HepG2 (cell line): ENCODE measurements at regions of chr1 and their contacts with region 1.

Region 1: DNA sequence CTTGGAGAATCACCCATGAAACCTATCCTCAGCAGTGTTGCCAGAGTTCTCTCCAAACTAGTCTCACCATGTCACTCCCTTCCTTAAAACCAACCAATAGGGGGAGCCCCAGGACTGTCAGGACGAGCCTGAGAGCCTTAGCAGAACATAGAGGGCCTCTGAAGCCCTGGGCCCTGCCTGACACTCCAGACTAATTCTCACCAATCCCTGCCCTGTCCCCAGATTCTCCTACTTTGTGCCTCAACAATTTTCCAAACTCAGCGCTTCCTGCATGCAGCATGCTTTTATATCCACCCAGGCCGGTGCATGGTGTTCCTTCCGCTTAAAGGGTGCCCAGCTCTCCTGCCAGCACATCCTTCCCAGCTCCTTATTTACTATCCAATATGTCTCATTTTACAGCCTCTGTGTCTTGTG is 42.7 kb downstream of the HSD3B1 start:
- DNase-seq: peak; percentile 53
- ATAC-seq: peak; percentile 98
- H3K4me3 ChIP-seq: no peak overlapping the region
- H3K27ac ChIP-seq: no peak overlapping the region
- H3K4me1 ChIP-seq: no peaks in the 10 kb centered on the region
- H3K27me3 ChIP-seq: peaks cover 1 to 6% of the 10 kb centered on the region in 2 experiments; a peak in 2 of 5 replicates
- CTCF ChIP-seq: peak; percentile 72
- EP300 ChIP-seq: no peak
- POLR2A ChIP-seq: no peak
- RAD21 ChIP-seq: 0 out of 2 replicates have a peak, but pooled peaks have one; percentile 20

Region 2: GRCh38 chr1:118767971-118768370 is 781.8 kb before region 1 on chr1:
- CTCF ChIA-PET with region 1: no interaction called
- POLR2A ChIA-PET with region 1: no interaction called
- in situ Hi-C with region 1: no loop called
- intact Hi-C with region 1: no loop called
- DNase-seq: no peak
- ATAC-seq: no peak
- H3K4me3 ChIP-seq: no peak overlapping the region
- H3K27ac ChIP-seq: no peak overlapping the region
- H3K4me1 ChIP-seq: no peaks in the 10 kb centered on the region
- H3K27me3 ChIP-seq: no peaks in the 10 kb centered on the region; a peak in 1 of 5 replicates
- CTCF ChIP-seq: no peak
- EP300 ChIP-seq: no peak
- POLR2A ChIP-seq: no peak
- RAD21 ChIP-seq: no peak

Region 3: GRCh38 chr1:119594376-119594775 is 44.6 kb after region 1 on chr1:
- CTCF ChIA-PET with region 1: no interaction called
- POLR2A ChIA-PET with region 1: no interaction called
- in situ Hi-C with region 1: no loop called
- intact Hi-C with region 1: loop called (anchors 10 kb)
- DNase-seq: no peak
- ATAC-seq: no peak
- H3K4me3 ChIP-seq: no peak overlapping the region
- H3K27ac ChIP-seq: no peak overlapping the region
- H3K4me1 ChIP-seq: no peaks in the 10 kb centered on the region
- H3K27me3 ChIP-seq: no peaks in the 10 kb centered on the region
- CTCF ChIP-seq: no peak
- EP300 ChIP-seq: no peak
- POLR2A ChIP-seq: no peak
- RAD21 ChIP-seq: no peak